ENCODE measurements at regions of chr14 and their contacts with region 1.

Region 1: GRCh38 chr14:23727566-23728335 is 91.6 kb downstream of the DHRS2 start:
- DNase-seq: peak; percentile 37 to 54 (median 39)
- ATAC-seq: peak; percentile 91
- H3K4me3 ChIP-seq: no peak overlapping the region
- H3K27ac ChIP-seq: no peak overlapping the region
- H3K4me1 ChIP-seq: no peaks in the 10 kb centered on the region; a peak in 1 of 5 replicates
- H3K27me3 ChIP-seq: no peaks in the 10 kb centered on the region
- CTCF ChIP-seq: peak; percentile 44 to 57 (median 45); a peak in 4 of 6 replicates
- EP300 ChIP-seq: no peak
- POLR2A ChIP-seq: no peak
- RAD21 ChIP-seq: peak; percentile 63 to 65

Region 2: DNA sequence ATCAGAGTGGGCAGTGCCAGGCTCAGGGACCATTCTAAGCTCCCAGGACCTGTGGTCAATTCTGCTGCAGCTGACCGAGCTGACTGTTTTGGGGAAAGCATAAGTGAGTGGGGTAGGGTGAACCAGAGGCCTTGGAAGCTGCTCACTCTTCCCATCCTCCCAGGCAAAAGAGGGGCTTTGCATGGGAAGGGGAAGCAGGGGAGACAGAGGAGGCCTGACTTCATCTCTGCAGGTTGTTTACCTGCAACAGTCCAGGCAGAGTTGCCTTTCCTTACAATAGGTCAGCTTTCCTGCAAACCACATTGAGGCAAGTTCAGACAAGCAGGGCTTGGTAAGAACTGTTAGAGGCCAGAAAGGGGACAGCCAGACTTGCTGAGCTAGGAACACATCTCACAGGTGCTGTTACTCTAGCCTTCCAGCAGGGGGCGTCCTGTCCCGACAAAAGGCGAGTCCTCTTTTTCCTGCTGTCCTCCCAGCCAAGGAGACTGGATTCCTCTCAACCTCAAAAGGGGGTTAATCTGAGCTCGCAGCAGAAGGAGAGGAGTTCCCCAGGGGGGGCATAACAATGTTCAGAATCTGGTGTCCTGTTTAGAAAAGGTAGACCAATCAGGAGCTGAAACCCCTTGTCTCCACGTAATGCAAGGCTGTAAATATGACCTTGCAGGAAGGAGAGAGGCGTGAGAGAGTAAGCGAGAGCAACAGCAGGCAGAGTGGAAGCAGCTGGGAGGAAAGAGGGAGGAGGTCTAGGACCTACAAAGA is 95.9 kb before region 1 on chr14:
- CTCF ChIA-PET with region 1: no interaction called
- POLR2A ChIA-PET with region 1: no interaction called
- in situ Hi-C with region 1: no loop called
- intact Hi-C with region 1: loop called (anchors 5 kb)
- DNase-seq: peak; percentile 63 to 73 (median 66)
- ATAC-seq: peak; percentile 89
- H3K4me3 ChIP-seq: no peak overlapping the region
- H3K27ac ChIP-seq: no peak overlapping the region
- H3K4me1 ChIP-seq: no peaks in the 10 kb centered on the region; a peak in 1 of 5 replicates
- H3K27me3 ChIP-seq: no peaks in the 10 kb centered on the region; a peak in 1 of 5 replicates
- CTCF ChIP-seq: peak; percentile 74 to 89 (median 82)
- EP300 ChIP-seq: no peak
- POLR2A ChIP-seq: no peak
- RAD21 ChIP-seq: peak; percentile 70 to 81

Region 3: GRCh38 chr14:23910101-23910875 is 182.5 kb after region 1 on chr14:
- CTCF ChIA-PET with region 1: interaction called, 13 read pairs
- POLR2A ChIA-PET with region 1: no interaction called
- in situ Hi-C with region 1: no loop called
- intact Hi-C with region 1: loop called (anchors 1 kb)
- DNase-seq: peak; percentile 46 to 61 (median 56)
- ATAC-seq: peak; percentile 89
- H3K4me3 ChIP-seq: no peak overlapping the region
- H3K27ac ChIP-seq: no peak overlapping the region
- H3K4me1 ChIP-seq: no peaks in the 10 kb centered on the region
- H3K27me3 ChIP-seq: no peaks in the 10 kb centered on the region
- CTCF ChIP-seq: peak; percentile 63 to 77 (median 73)
- EP300 ChIP-seq: no peak
- POLR2A ChIP-seq: no peak
- RAD21 ChIP-seq: peak; percentile 56 to 75

Region 4: GRCh38 chr14:23929822-23930294 is 202.1 kb after region 1 on chr14:
- CTCF ChIA-PET with region 1: no interaction called
- POLR2A ChIA-PET with region 1: no interaction called
- in situ Hi-C with region 1: no loop called
- intact Hi-C with region 1: loop called (anchors 5 kb)
- DNase-seq: peak; percentile 74 to 81 (median 74)
- ATAC-seq: peak; percentile 87
- H3K4me3 ChIP-seq: no peak overlapping the region
- H3K27ac ChIP-seq: no peak overlapping the region
- H3K4me1 ChIP-seq: peaks cover 9 to 30% of the 10 kb centered on the region in 2 experiments
- H3K27me3 ChIP-seq: no peaks in the 10 kb centered on the region; a peak in 1 of 5 replicates
- CTCF ChIP-seq: peak; percentile 71 to 85 (median 81)
- EP300 ChIP-seq: no peak
- POLR2A ChIP-seq: no peak
- RAD21 ChIP-seq: peak; percentile 29 to 60; a peak in 3 of 4 replicates

Region 5: DNA sequence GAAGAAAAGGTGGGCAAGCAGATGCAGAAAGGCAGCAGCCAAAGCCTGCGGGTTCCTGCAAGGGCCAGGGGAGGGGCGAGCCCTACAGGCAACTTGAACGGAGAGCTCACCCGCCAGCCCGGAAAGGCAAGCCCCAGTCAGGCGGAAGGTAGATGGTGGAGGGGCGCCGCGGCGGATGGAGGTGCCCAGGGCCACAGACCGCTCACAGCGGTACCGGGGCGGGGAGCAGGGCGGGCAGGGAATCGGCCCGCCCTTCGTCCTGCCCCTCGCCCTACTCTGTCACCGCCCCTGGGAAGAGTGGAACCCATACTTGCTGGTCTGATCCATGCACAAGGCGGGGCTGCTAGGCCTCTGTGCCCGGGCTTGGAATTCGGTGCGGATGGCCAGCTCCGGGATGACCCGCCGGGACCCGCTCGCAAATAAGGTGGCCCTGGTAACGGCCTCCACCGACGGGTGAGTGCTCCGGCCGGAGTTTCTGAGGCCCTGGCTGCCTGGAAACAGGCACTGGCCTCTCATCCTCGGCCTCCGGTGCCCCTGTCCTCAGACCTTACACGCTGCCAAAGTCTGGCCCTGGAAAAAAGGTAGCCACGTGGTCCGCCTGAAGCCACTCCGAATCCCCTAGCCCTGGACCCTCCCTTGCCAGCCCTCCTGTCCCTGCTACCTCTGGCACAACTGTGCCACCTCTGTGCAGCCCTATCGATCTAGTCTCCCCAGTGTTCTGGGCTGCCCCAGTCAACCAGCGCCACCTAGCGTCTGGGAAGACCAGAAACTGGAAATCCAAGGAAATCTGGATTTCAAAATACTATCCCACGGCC is 225.9 kb after region 1 on chr14 and contains the start of gene DHRS4:
- CTCF ChIA-PET with region 1: no interaction called
- POLR2A ChIA-PET with region 1: no interaction called
- in situ Hi-C with region 1: no loop called
- intact Hi-C with region 1: loop called (anchors 1 kb)
- DNase-seq: peak; percentile 66 to 76 (median 70)
- ATAC-seq: peak; percentile 97
- H3K4me3 ChIP-seq: peak within 1 kb of the TSS; percentile 63
- H3K27ac ChIP-seq: peak within 1 kb of the TSS; percentile 55
- H3K4me1 ChIP-seq: peaks cover 0 to 10% of the 10 kb centered on the region in 2 experiments; a peak in 2 of 5 replicates
- H3K27me3 ChIP-seq: no peaks in the 10 kb centered on the region
- CTCF ChIP-seq: peak; percentile 80 to 83 (median 82)
- EP300 ChIP-seq: no peak
- POLR2A ChIP-seq: peak; percentile 65
- RAD21 ChIP-seq: peak; percentile 67 to 73
- polyA plus RNA-seq, gene DHRS4: 0.51 to 1.6 TPM